ENCODE measurements at regions of chr1 and their contacts with region 1.

Region 1: GRCh38 chr1:26864610-26865527 is 1.9 kb downstream of the SFN start:
- DNase-seq: peak; percentile 96 to 97
- ATAC-seq: peak; percentile 96 to 99 (median 96)
- H3K4me3 ChIP-seq: peak overlapping the region; percentile 88
- H3K4me3 Mint-ChIP-seq: peak overlapping the region; percentile 94
- H3K27ac ChIP-seq: peak overlapping the region; percentile 75
- H3K27ac Mint-ChIP-seq: peak overlapping the region; percentile 86 to 91
- H3K4me1 ChIP-seq: peaks cover 24% of the 10 kb centered on the region
- H3K4me1 Mint-ChIP-seq: peaks cover 8 to 18% of the 10 kb centered on the region in 2 donors
- H3K27me3 ChIP-seq: no peaks in the 10 kb centered on the region
- H3K27me3 Mint-ChIP-seq: no peaks in the 10 kb centered on the region
- CTCF ChIP-seq: no peak

Region 2: DNA sequence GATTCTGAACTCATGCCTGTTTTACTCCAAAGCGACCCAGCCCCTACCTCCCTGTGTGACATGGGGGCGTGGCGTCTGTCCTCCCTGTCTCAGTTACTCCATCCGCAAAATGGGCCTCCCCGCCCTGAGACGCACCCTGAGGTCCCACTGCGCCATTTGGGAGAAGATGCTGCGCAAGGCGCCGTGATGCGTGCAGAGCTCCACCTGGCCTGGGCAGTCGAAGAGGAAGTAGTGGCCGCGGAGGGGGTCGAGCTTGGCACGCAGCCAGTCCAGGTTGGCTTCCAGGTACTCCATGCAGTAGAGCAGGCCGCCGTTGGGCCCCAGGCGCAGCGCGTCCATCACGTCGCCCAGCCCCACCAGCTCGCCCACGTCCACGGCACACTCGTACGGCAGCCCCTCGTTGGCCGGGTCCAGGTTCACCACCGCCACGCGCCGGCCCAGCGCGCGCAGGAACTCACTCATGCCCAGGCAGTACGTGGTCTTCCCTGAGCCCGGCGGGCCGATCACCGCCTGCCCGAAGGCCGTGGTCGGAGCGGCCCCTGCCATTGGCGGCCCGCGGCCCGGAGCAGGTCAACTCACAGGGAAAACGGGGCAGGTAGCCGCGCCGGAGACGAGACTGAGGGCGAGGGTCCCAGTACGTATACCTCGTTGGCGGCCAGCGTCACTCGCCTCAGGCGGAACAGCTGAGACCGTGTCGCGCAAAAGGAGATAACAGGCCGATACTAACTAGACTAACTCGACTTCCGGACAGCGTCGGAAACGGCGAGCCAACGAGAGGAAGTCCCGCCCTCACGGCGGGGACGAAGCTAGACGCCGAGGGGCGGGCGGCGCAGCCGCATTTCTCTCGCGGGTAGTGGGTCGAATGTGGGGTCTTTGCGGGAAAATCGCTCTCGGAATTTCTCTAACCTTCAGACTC is 24.9 kb after region 1 on chr1 and contains the start of gene GPN2:
- intact Hi-C with region 1: loop called (anchors 1 kb)
- DNase-seq: peak; percentile 70 to 90
- ATAC-seq: peak; percentile 94 to 97 (median 95)
- H3K4me3 ChIP-seq: peak within 1 kb of the TSS; percentile 81
- H3K4me3 Mint-ChIP-seq: peak within 1 kb of the TSS; percentile 94
- H3K27ac ChIP-seq: peak within 1 kb of the TSS; percentile 89
- H3K27ac Mint-ChIP-seq: peak within 1 kb of the TSS; percentile 94 to 96
- H3K4me1 ChIP-seq: peaks cover 18% of the 10 kb centered on the region
- H3K4me1 Mint-ChIP-seq: peaks cover 18 to 30% of the 10 kb centered on the region in 2 donors
- H3K27me3 ChIP-seq: no peaks in the 10 kb centered on the region
- H3K27me3 Mint-ChIP-seq: no peaks in the 10 kb centered on the region
- CTCF ChIP-seq: no peak
- total RNA-seq, gene GPN2: 32.4 to 42.6 (median 37.9) TPM